Activated T-helper 1 cell treated with anti-CD3 and anti-CD28 coated beads, Interleukin-12 subunit alpha, Interleukin-12 subunit beta, Interleukin-2, Interleukin-4 antibody, amounts not matched to agents 30 ng/mL and 10 ng/mL and 1 ng/mL, durations not matched to agents 14 hours and 24 hours and 36 hours (primary cell): ENCODE measurements at regions of chr4 and their contacts with region 1.

Region 1: DNA sequence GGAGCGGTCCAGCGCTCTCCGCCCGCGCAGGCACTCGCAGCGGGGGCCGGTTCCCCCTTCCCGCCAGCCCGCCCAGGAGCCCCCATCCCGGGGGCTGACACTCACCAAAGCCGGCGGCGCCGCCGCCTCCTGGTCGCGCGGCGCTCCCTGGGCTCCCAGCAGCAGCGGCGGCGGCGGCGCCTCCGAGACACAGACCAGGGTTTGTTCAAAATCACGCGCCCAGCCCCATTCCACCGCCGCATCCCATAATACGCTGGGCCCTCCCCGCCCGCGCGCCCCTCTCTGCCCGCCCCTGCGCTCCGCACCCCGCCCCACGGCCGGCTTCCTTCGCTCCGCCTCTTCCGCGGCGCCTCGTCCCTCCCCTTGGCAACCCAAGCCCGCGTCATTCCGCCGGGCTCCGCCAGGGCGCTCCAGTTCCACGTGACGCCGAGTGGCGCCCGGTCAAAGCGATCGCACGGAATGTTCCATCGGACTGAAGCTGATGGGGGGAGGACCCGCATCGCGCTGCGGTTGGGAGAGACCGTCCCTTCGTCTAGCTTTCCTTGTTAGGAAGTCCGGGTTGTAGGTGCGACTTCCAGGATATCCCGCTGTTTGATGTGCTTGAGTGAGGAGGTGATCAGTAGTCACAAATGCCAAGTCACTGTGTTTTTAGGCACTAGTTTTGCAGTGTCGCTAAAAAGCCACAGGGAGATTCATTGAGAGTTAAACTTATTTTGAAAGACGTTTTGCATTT is 2.2 kb upstream of the LIN54 start:
- DNase-seq: peak; percentile 97
- H3K4me3 Mint-ChIP-seq: peak overlapping the region; percentile 91
- H3K27ac Mint-ChIP-seq: peak overlapping the region; percentile 92
- H3K4me1 Mint-ChIP-seq: peaks cover 45% of the 10 kb centered on the region
- H3K27me3 Mint-ChIP-seq: no peaks in the 10 kb centered on the region

Region 2: DNA sequence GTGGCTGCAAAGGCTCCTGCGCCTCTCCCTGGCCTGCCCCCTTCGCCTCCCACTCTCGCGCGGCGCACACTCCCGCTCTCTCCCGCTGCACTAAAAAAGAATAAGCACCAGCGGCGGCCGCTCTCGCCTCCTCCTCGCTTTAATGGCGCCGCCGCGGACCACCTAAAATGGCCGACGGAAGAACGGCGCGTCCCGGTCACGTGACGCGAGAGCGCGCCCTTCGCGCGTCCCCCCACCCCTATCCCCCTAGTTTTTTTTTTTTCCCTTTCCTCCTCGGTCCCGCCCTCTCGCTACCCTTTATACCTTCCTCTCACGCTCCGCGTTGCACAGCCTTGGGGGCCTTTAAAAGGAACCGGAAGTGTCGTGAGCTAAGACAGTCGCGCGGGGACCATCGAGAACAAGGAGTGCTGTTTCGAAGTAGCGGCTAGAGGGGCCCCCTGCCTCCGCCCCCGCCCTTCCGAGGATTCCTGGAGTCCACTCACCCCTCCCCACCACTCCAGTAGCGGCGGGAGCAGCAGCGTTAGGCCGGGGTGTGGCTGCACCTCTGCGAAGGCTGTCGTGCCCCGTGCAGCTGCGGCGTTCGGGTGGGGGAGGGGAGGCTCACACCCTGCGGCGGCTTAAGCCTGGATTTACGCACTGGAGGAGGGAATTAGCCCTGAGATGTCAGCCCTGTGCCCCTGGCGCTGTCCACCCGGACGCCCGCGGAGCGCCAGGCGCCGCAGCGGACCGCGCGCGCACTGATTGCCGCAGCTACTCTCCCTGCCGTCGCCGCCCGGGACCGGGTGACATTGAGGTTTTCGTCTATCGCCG is 638.8 kb before region 1 on chr4 and contains the start of gene HNRNPD:
- intact Hi-C with region 1: loop called (anchors 1 kb)
- DNase-seq: peak; percentile 92
- H3K4me3 Mint-ChIP-seq: peak within 1 kb of the TSS; percentile 99
- H3K27ac Mint-ChIP-seq: peak within 1 kb of the TSS; percentile 100
- H3K4me1 Mint-ChIP-seq: peaks cover 37% of the 10 kb centered on the region
- H3K27me3 Mint-ChIP-seq: peaks cover 2% of the 10 kb centered on the region
- total RNA-seq, gene HNRNPD: 434 and 438 TPM in 2 replicates

Region 3: DNA sequence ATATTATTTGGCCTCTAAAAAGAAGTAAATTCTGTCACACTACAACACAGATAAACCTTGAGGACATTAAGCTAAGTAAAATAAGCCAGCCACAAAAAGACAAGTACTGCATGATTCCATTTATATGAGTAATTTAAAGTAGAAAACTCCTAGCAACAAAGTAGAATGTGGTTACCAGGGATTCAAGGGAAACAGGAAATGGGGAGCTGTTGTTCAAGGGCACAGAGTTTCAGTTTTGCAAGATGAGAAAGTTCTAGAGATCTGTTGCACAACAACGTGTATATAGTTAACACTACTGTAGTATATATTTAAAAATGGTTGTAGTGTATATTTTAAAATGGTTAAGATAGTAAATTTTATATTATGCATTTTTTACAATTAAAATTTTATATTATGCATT is 147.3 kb before region 1 on chr4:
- intact Hi-C with region 1: loop called (anchors 1 kb)
- DNase-seq: peak; percentile 24
- H3K4me3 Mint-ChIP-seq: no peak overlapping the region
- H3K27ac Mint-ChIP-seq: peak overlapping the region; percentile 91
- H3K4me1 Mint-ChIP-seq: peaks cover 48% of the 10 kb centered on the region
- H3K27me3 Mint-ChIP-seq: no peaks in the 10 kb centered on the region

Region 4: GRCh38 chr4:82989575-82990429 is 23.1 kb before region 1 on chr4:
- intact Hi-C with region 1: loop called (anchors 1 kb)
- DNase-seq: no peak
- H3K4me3 Mint-ChIP-seq: peak overlapping the region; percentile 64
- H3K27ac Mint-ChIP-seq: peak overlapping the region; percentile 79
- H3K4me1 Mint-ChIP-seq: peaks cover 14% of the 10 kb centered on the region
- H3K27me3 Mint-ChIP-seq: no peaks in the 10 kb centered on the region

Region 5: DNA sequence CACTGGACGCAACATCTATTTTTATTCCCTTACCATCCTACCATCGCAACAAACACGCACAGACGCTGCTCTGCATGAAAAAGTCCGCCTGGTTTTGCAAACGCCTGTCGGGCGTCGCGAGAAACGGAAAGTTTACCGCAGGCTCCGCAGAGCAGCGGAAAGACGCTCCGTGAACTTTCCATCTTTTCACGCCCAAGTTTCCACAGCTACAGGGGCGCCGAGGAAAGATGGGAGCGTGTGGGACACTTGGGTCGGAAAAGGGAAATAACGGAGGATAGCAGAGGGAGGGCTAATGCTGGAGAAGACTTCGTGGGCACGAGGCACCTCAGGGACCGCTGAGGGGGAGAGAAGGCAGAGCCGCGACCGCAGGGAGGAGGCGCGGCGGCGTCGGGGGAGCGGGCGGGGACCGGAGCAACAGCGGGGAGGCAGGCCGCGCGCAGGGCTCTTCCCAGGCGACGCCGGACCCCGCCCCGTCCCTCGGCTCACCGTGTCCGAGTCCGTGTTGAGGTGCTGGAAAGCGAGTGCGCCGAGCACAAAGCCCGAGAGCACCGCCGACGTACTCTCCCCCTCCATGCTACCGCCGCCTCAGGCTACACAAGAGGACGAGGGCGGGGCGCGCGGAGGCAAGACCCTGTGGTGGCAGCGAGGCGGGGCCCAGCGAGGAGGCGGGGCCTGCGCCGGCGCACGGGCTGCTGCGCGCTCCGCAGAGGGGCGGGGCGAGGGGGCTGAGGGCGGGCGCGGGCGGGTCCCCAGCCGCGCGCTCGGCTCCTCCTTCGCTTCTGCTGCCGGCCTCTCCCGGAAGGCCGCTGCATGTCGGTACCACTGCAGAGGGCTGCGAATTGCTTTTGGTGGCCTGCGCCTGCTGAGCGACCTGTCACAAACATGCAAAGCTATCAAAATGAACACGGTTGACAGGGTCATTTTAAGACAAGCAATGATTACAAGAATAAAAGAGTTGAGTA is 471.9 kb after region 1 on chr4 and contains the start of gene ABRAXAS1:
- intact Hi-C with region 1: loop called (anchors 1 kb)
- DNase-seq: peak; percentile 91
- H3K4me3 Mint-ChIP-seq: peak within 1 kb of the TSS; percentile 90
- H3K27ac Mint-ChIP-seq: peak within 1 kb of the TSS; percentile 95
- H3K4me1 Mint-ChIP-seq: peaks cover 10% of the 10 kb centered on the region
- H3K27me3 Mint-ChIP-seq: peaks cover under 1% of the 10 kb centered on the region
- total RNA-seq, gene ABRAXAS1: 11.0 and 11.3 TPM in 2 replicates